Transverse colon (tissue), 4 donors: ENCODE measurements at regions of chr1 and their contacts with region 1.

Region 1: DNA sequence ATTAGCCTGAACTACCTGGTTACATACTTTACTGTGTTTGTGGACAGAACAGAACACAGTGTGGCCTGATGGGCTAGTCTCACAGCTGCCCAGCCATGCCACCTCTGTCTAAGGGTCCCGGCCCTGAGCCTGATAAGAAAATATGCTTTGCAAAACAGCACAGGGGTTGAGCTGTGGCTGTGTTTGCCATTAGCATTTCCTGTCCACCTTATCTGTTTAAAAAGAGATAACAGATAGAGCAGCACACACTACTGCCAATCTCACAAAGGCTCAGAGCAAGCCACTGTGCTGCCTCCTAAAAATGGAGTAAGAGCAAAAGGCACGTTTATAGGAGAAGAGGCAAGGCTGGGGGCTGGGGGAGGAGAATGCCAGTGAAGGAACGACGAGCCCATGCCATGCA is 95.0 kb downstream of the SUSD4 start:
- DNase-seq: no peak
- H3K4me3 ChIP-seq: no peak overlapping the region
- H3K27ac ChIP-seq: no peak overlapping the region
- H3K4me1 ChIP-seq: peaks cover 0 to 6% (median 0%) of the 10 kb centered on the region in 4 donors
- H3K27me3 ChIP-seq: no peaks in the 10 kb centered on the region
- CTCF ChIP-seq: no peak
- EP300 ChIP-seq: no peak
- POLR2A ChIP-seq: no peak

Region 2: DNA sequence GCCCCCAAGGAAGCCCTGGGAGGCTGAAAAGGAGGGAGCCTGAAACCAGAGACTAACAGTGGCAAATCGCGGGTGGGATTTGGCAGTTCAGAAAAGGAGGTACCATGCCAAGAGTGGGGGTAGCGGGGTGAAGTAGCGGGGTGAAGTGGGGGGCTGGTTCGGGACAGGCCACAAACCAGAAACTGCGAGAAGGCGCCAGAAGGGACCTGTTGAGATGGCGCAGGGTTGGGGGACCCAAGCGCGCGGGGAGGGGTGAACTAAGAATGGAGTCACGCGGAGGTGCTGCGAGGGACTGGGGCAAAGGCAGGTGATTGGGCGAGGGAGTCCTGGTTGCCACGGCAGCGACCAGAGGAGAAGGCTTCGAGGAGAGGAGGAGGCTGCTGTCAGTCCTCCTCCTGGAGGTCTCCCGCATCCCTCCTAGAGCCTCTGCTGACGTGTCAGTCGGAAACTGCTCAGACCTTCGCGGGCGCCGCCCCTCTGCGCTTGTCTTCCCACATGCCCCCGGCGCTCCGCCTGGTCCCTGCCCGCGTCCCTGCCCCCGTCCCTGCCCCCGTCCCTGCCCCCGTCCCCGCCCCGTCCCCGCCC is 651.5 kb before region 1 on chr1:
- in situ Hi-C with region 1: no loop called
- intact Hi-C with region 1: no loop called
- DNase-seq: peak; percentile 95
- H3K4me3 ChIP-seq: peak overlapping the region; percentile 34 to 100 (median 46)
- H3K27ac ChIP-seq: peak overlapping the region; percentile 71 to 81 (median 77)
- H3K4me1 ChIP-seq: peaks cover 4 to 51% (median 15%) of the 10 kb centered on the region in 4 donors
- H3K27me3 ChIP-seq: peaks cover 8% of the 10 kb centered on the region
- CTCF ChIP-seq: no peak
- EP300 ChIP-seq: no peak
- POLR2A ChIP-seq: peak; percentile 58

Region 3: GRCh38 chr1:222920169-222920568 is 348.8 kb before region 1 on chr1:
- in situ Hi-C with region 1: no loop called
- intact Hi-C with region 1: loop called (anchors 5 kb)
- DNase-seq: no peak
- H3K4me3 ChIP-seq: no peak overlapping the region
- H3K27ac ChIP-seq: no peak overlapping the region
- H3K4me1 ChIP-seq: peaks cover 0 to 4% (median 2%) of the 10 kb centered on the region in 4 donors
- H3K27me3 ChIP-seq: no peaks in the 10 kb centered on the region
- CTCF ChIP-seq: no peak
- EP300 ChIP-seq: no peak
- POLR2A ChIP-seq: no peak